Heart left ventricle (tissue), 16 donors: ENCODE measurements at regions of chr5 and their contacts with region 1.

Region 1: DNA sequence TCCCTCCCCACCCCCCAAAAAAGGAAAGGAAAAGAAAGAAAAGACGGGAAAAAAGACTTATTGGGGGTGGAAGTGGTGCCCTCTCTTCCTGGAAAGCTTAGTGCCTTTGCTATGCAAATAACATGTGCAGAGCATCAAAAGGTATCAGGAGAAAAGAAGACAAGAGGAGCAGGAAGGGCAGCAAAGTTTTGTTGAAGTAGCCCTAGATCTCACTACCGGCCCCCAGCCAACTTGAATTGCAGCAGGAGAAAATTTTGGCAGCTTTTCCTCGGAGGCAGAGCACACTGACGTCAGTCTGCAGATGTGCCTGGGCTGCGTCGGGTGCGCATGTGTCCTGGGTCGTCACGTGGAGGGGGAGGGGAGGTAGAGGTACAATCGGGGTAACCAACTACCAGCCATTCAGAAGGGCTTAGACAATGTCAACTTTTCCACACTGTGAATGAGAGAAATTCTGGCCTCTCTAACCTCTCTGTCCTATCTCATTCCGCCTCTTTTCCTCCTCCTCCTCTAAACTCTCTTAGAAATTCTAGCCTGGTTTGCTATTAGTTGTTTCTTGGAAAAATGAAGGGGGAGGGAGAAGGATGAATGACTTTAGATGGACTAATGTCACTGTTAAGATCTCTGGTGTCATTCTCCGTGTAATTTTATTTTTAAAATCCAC is at the start of gene ADAMTS6:
- DNase-seq: peak; percentile 91 to 96 (median 95)
- ATAC-seq: peak; percentile 94 to 98 (median 96)
- H3K4me3 ChIP-seq: peak within 1 kb of the TSS; percentile 20 to 75 (median 64)
- H3K27ac ChIP-seq: peak within 1 kb of the TSS; percentile 77 to 94 (median 90)
- H3K4me1 ChIP-seq: peaks cover 0 to 27% (median 11%) of the 10 kb centered on the region in 12 donors
- H3K27me3 ChIP-seq: no peaks in the 10 kb centered on the region
- CTCF ChIP-seq: no peak
- POLR2A ChIP-seq: peak in 1 of 2 donors; percentile 66
- total RNA-seq, gene ADAMTS6: 1.5 to 4.3 (median 3.4) TPM

Region 2: DNA sequence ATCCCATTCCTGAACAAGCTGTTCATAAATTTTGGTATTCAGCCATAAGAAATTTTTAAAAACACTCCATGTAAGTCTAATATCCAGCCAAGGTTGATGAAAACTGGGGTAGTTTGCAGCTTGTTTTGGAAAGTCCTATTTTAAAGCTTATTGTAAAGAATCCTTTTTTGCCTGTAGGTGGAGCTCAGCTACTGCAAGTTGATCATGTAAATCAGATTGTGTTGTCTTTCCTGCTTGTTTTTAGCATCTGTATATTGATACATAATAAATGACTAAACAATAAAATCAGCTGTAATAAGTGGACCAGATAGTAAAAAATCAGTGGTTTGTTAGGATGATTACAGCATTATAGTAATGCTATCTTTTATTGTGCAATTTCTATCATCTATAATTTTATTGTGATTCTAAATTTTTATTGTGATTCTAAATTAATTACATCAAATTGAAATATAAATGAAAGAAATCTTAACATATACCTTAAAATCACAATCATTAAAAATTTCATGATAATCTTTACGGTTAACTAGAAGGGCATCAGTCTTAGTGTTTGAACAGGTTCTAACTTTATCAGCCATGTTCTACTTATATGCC is 670.6 kb before region 1 on chr5:
- intact Hi-C with region 1: loop called in 9 of 10 experiments (anchors 1 to 5 kb)
- DNase-seq: no peak
- ATAC-seq: peak in 1 of 4 donors; percentile 57
- H3K4me3 ChIP-seq: no peak overlapping the region
- H3K27ac ChIP-seq: no peak overlapping the region
- H3K4me1 ChIP-seq: peaks cover 0 to 16% (median 5%) of the 10 kb centered on the region in 12 donors
- H3K27me3 ChIP-seq: no peaks in the 10 kb centered on the region
- CTCF ChIP-seq: peak; percentile 52 to 83 (median 70)
- POLR2A ChIP-seq: no peak

Region 3: DNA sequence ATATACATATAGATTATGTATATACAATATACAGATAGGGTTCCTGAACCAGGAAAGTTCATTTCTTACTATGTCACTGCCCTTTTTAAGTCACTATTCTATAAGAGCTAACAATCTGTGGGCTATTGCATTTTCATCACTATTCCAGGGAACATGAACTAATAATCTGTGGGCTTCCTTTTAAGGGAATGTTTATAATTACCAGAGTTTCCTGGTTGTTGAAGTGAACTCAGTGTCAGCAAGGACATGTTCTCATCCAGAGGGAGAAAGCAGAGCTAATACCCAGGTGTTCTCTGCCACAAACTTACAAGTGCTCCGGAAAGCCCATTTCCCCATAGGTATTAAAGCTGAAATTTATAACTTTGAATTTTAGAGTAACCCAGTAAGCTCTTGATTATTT is 643.4 kb before region 1 on chr5:
- intact Hi-C with region 1: no loop called
- DNase-seq: no peak
- ATAC-seq: no peak
- H3K4me3 ChIP-seq: no peak overlapping the region
- H3K27ac ChIP-seq: peak overlapping the region in 2 of 12 donors; percentile 13 to 44
- H3K4me1 ChIP-seq: peaks cover 0 to 49% (median 20%) of the 10 kb centered on the region in 12 donors
- H3K27me3 ChIP-seq: no peaks in the 10 kb centered on the region
- CTCF ChIP-seq: no peak
- POLR2A ChIP-seq: no peak

Region 4: DNA sequence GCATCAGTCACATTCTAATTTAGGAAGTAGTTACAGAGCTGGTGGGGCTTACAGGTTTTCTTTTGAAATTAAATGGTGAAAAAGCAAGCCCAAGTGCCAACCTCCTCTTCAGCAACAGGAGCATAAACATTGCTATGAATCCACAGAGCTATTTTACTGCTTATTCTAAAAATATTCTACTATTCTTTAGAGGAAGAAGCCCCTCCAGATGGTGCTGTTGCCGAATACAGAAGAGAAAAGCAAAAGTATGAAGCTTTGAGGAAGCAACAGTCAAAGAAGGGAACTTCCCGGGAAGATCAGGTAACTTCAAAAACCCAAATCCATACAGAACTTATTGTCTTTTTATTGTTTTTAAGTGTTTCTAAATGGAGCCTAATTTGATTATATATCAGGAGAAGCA is 510.3 kb before region 1 on chr5:
- intact Hi-C with region 1: loop called in 3 of 10 experiments (anchors 5 kb)
- DNase-seq: no peak
- ATAC-seq: no peak
- H3K4me3 ChIP-seq: no peak overlapping the region
- H3K27ac ChIP-seq: no peak overlapping the region
- H3K4me1 ChIP-seq: peaks cover 0 to 23% (median 1%) of the 10 kb centered on the region in 12 donors
- H3K27me3 ChIP-seq: no peaks in the 10 kb centered on the region
- CTCF ChIP-seq: peak in 8 of 12 donors; percentile 10 to 50 (median 28)
- POLR2A ChIP-seq: no peak

Region 5: GRCh38 chr5:65035211-65036206 is 446.3 kb before region 1 on chr5:
- intact Hi-C with region 1: loop called in 5 of 10 experiments (anchors 1 to 10 kb)
- DNase-seq: peak; percentile 92 to 95 (median 93)
- ATAC-seq: peak; percentile 81 to 95 (median 92)
- H3K4me3 ChIP-seq: peak overlapping the region; percentile 45 to 86 (median 69)
- H3K27ac ChIP-seq: peak overlapping the region; percentile 92 to 100 (median 96)
- H3K4me1 ChIP-seq: peaks cover 0 to 54% (median 28%) of the 10 kb centered on the region in 12 donors
- H3K27me3 ChIP-seq: no peaks in the 10 kb centered on the region
- CTCF ChIP-seq: peak in 3 of 12 donors; percentile 5 to 33 (median 21)
- POLR2A ChIP-seq: peak in 1 of 2 donors; percentile 63

Region 6: DNA sequence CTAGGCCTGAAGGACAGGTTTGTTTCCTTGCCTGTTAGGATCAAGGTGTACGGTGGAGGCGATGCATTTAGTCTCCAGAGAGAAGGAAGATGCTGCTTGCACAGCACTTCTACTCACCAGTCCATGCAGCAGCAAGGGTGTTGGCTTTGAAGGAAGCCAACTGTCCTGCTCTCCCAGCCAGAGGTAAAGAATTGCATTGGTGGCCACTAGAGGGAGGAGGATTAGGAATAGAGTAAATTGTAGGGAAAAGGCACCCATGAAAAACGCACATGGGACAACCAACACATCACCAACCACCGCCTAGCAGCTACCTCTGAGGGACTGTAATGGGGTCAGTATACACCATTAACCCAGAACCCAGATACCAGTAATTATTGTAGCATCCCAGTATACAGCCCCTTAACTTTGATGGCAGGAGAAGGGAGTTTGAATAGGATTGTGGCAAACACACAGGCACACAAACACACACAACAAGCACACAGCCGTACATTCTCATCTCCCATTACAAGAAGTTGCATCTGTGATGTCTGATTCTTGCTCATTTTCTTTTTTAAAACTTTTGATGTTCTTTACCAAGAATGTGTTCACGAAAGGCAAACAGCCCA is 267.7 kb before region 1 on chr5:
- intact Hi-C with region 1: loop called in 7 of 10 experiments (anchors 5 to 10 kb)
- DNase-seq: peak in 1 of 5 donors; percentile 6
- ATAC-seq: peak in 3 of 4 donors; percentile 48 to 70 (median 52)
- H3K4me3 ChIP-seq: no peak overlapping the region
- H3K27ac ChIP-seq: no peak overlapping the region
- H3K4me1 ChIP-seq: no peaks in the 10 kb centered on the region
- H3K27me3 ChIP-seq: no peaks in the 10 kb centered on the region
- CTCF ChIP-seq: peak in 11 of 12 donors; percentile 32 to 60 (median 39)
- POLR2A ChIP-seq: no peak

Region 7: GRCh38 chr5:65413822-65414221 is 67.9 kb before region 1 on chr5:
- intact Hi-C with region 1: no loop called
- DNase-seq: no peak
- ATAC-seq: no peak
- H3K4me3 ChIP-seq: no peak overlapping the region
- H3K27ac ChIP-seq: no peak overlapping the region
- H3K4me1 ChIP-seq: no peaks in the 10 kb centered on the region
- H3K27me3 ChIP-seq: no peaks in the 10 kb centered on the region
- CTCF ChIP-seq: no peak
- POLR2A ChIP-seq: no peak